ENCODE measurements at regions of chr2 and their contacts with region 1.

Region 1: GRCh38 chr2:86396291-86396785 is 44.8 kb upstream of the KDM3A start:
- DNase-seq: peak; percentile 58
- H3K4me3 Mint-ChIP-seq: peak overlapping the region; percentile 27
- H3K27ac Mint-ChIP-seq: peak overlapping the region; percentile 5
- H3K4me1 Mint-ChIP-seq: peaks cover 24% of the 10 kb centered on the region
- H3K27me3 Mint-ChIP-seq: no peaks in the 10 kb centered on the region
- CTCF ChIP-seq: peak; percentile 33

Region 2: DNA sequence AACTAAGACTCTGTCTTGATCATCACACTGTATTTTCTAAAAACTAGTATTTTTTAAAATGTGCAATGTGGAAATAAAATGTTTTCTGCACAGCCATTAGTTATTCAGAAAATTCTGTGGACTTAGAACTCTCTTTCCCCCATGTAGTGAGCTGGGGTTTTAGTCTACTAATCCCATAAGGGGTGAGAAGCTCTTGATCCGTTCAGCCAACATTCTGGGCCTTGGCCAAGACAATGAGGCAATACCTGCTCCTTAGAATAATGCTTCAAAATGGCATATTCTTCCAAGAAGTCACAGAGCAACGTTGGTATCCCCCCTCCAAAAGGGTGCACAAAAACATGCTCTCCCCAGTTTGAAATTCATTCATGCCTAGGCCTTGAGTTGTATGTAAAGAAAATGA is 63.0 kb before region 1 on chr2:
- CTCF ChIA-PET with region 1: no interaction called
- intact Hi-C with region 1: no loop called
- DNase-seq: no peak
- H3K4me3 Mint-ChIP-seq: no peak overlapping the region
- H3K27ac Mint-ChIP-seq: no peak overlapping the region
- H3K4me1 Mint-ChIP-seq: peaks cover 18% of the 10 kb centered on the region
- H3K27me3 Mint-ChIP-seq: peaks cover 13% of the 10 kb centered on the region
- CTCF ChIP-seq: no peak

Region 3: DNA sequence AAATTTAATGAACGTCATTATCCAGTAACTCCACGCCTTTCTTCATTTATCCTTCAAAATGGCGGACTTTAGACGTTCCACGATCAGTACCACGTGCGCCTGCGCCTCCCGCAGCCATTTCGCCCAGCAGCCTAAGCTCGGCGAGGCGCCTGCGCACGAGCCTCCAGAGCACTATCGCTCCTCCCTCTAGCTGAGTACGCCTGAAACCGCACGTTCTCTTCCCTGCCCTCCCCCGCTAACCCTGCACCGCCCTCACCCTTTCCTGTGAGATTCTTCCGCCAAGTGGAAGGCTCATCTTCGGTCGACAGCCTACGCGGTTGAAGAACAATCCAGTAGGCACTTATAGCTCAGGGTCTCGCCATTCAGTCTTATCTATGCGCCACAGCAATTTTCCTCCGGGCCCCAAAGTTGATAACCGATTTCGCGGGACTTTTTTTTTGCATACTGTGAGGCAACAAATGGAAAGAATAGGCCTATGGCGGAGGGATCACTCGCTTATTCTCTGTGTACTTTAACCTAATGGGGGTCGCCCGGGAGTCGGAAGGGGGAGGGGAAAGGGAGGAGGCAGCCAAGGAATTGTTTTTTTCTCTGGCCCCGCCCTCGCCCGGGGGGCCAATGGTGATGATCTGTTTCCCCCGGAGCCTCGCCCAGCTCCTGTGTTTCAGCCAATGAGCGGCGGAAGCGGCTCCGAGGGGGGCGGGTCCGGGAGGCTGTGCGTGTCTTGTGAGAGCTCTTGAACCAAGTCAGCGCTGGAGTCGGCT is 44.5 kb after region 1 on chr2 and contains the start of gene KDM3A:
- CTCF ChIA-PET with region 1: interaction called, 12 read pairs
- intact Hi-C with region 1: loop called (anchors 5 kb)
- DNase-seq: peak; percentile 99
- H3K4me3 Mint-ChIP-seq: peak within 1 kb of the TSS; percentile 79
- H3K27ac Mint-ChIP-seq: peak within 1 kb of the TSS; percentile 96
- H3K4me1 Mint-ChIP-seq: peaks cover 26% of the 10 kb centered on the region
- H3K27me3 Mint-ChIP-seq: no peaks in the 10 kb centered on the region
- CTCF ChIP-seq: no peak
- total RNA-seq, gene KDM3A: 35.5 and 37.8 TPM in 2 replicates

Region 4: DNA sequence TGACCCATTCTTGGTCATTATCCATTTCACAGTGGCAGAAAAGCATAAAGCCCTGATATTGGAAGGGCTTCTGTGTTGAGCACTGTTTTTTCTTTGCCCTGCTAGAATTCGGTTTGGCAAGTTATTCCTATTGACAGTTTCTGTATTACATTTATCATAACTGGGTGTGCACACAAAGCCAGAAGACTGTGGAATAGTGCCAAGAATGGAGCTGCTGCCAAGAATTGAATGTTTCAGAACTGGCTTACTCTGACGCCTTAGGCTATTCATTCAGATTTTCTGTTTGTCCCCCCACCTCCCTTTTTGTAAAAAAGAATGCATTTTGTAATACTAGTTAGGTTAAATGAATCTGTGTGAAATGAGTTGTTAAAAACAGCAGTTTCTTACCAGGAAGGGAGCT is 57.5 kb after region 1 on chr2:
- CTCF ChIA-PET with region 1: interaction called, 9 read pairs
- intact Hi-C with region 1: loop called (anchors 1 kb)
- DNase-seq: peak; percentile 42
- H3K4me3 Mint-ChIP-seq: no peak overlapping the region
- H3K27ac Mint-ChIP-seq: no peak overlapping the region
- H3K4me1 Mint-ChIP-seq: no peaks in the 10 kb centered on the region
- H3K27me3 Mint-ChIP-seq: no peaks in the 10 kb centered on the region
- CTCF ChIP-seq: no peak

Region 5: GRCh38 chr2:86793752-86794151 is 397.4 kb after region 1 on chr2:
- CTCF ChIA-PET with region 1: no interaction called
- intact Hi-C with region 1: no loop called
- DNase-seq: no peak
- H3K4me3 Mint-ChIP-seq: no peak overlapping the region
- H3K27ac Mint-ChIP-seq: no peak overlapping the region
- H3K4me1 Mint-ChIP-seq: peaks cover 12% of the 10 kb centered on the region
- H3K27me3 Mint-ChIP-seq: peaks cover 56% of the 10 kb centered on the region
- CTCF ChIP-seq: no peak

Measured in Calu3 (cell line).